ENCODE measurements at regions of chr19 and their contacts with region 1.

Region 1: GRCh38 chr19:42325273-42325895 is at the start of gene MEGF8:
- DNase-seq: peak; percentile 96 to 100 (median 98)

Region 2: GRCh38 chr19:42396381-42397262 is 71.2 kb after region 1 on chr19:
- intact Hi-C with region 1: loop called (anchors 5 kb)
- DNase-seq: peak; percentile 97 to 100 (median 99)